GM12878 (cell line): ENCODE measurements at regions of chr17 and their contacts with region 1.

Region 1: DNA sequence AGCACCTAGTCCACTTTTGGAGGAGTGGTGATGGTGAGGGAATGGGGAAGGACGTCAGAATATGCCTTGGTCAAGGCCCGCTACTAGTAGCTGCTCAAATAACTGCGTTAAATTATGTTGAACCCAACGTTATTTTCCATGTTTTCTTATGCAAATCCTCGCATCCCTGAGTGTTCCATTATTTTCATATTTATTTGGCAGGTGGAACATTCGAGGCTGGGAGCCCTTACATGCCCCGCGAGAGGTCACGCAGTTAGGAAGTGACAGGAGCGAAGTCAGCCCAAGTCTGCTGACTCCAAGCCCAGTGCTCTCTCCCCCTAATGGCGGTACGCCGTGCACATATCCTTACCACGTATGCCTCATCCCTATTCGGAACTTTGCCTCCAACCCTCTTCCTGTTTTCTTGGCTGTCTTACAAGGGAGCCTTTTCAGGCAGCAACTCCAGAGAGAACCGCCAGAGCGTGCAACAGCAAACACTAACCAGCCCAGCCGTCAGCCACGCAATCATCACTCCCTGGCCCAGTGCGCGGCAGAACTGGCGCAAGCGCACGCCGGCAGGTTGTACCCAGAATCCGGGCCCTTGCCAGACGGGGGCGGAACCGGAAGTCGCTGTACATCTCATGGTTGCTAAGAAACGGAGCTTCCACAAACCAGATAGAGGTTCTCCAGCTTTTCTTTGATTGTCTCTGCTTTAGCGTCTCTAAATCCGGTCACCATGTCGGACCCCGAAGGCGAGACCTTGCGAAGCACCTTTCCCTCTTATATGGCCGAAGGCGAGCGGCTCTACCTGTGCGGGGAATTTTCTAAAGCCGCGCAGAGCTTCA is at the start of gene ODAD4:
- DNase-seq: peak; percentile 76
- ATAC-seq: peak; percentile 100
- H3K4me3 ChIP-seq: peak within 1 kb of the TSS; percentile 81
- H3K27ac ChIP-seq: peak within 1 kb of the TSS; percentile 62
- H3K4me1 ChIP-seq: peaks cover 7% of the 10 kb centered on the region
- H3K27me3 ChIP-seq: no peaks in the 10 kb centered on the region
- CTCF ChIP-seq: peak in 2 of 3 experiments; percentile 30 to 48; a peak in 3 of 6 replicates
- EP300 ChIP-seq: no peak
- POLR2A ChIP-seq: peak; percentile 97
- RAD21 ChIP-seq: no peak
- polyA plus RNA-seq, gene ODAD4: 0.10 to 0.44 TPM

Region 2: DNA sequence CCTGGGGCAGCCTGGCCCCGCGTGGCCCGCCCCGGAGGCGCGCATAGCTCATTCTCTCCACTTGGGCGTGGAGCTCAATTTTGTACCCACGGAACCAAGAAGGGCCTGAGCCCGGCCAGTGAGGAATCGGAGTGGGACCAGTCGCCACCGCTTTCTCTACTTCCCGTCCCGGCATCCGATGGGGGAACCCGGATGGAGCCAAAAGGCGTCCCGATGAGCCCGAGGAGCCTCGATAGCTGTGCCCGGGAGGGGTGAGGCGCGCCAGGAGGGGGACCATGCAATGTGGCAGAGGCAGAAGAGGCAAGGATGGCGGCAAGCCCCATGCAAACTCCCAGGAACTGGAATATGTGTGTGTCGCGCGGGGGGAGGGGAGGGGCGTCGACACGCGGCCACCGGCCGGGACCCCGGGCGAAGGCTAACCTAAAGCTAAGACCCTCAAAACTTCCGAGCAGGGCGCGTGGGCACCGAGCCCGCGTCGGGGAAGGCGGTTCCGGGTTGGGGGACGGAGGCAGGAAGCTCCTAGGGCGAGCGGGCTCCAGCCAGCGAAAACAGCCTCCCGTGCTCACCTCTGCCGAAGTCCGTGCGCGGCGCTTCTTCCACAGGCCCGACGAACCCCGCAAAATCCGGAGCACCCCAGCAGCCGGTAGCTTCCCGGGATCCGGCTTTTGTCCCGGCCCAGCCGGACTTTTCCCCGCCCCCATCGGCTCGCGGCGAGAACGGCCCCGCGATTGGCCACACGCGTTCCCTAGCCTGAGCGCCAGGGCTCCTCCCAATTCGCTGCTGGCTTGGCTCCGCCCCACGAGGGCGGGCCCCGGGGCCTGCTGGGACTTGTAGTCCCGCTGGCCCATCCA is 11.7 kb before region 1 on chr17 and contains the start of gene ACLY:
- CTCF ChIA-PET with region 1: interaction called, 16 read pairs
- POLR2A ChIA-PET with region 1: interaction called, 52 read pairs
- RAD21 ChIA-PET with region 1: interaction called, 23 read pairs
- SMC1A ChIA-PET with region 1: interaction called, 19 read pairs
- in situ Hi-C with region 1: no loop called
- intact Hi-C with region 1: no loop called
- DNase-seq: no peak
- ATAC-seq: peak; percentile 98
- H3K4me3 ChIP-seq: peak within 1 kb of the TSS; percentile 98
- H3K27ac ChIP-seq: peak within 1 kb of the TSS; percentile 86
- H3K4me1 ChIP-seq: peaks cover 19% of the 10 kb centered on the region
- H3K27me3 ChIP-seq: no peaks in the 10 kb centered on the region
- CTCF ChIP-seq: 0 out of 6 replicates have a peak, but pooled peaks of 1 of the 3 experiments have one; percentile 9
- EP300 ChIP-seq: no peak
- POLR2A ChIP-seq: peak; percentile 87
- RAD21 ChIP-seq: no peak
- polyA plus RNA-seq, gene ACLY: 32.6 to 39.6 TPM

Region 3: GRCh38 chr17:41959336-41960095 is 29.3 kb after region 1 on chr17:
- CTCF ChIA-PET with region 1: interaction called, 17 read pairs
- POLR2A ChIA-PET with region 1: interaction called, 3 read pairs
- RAD21 ChIA-PET with region 1: interaction called, 3 read pairs
- SMC1A ChIA-PET with region 1: interaction called, 5 read pairs
- in situ Hi-C with region 1: no loop called
- intact Hi-C with region 1: no loop called
- DNase-seq: no peak
- ATAC-seq: peak; percentile 85
- H3K4me3 ChIP-seq: no peak overlapping the region
- H3K27ac ChIP-seq: no peak overlapping the region
- H3K4me1 ChIP-seq: no peaks in the 10 kb centered on the region
- H3K27me3 ChIP-seq: no peaks in the 10 kb centered on the region
- CTCF ChIP-seq: peak; percentile 32 to 48 (median 47); a peak in 4 of 6 replicates
- EP300 ChIP-seq: no peak
- POLR2A ChIP-seq: no peak
- RAD21 ChIP-seq: peak; percentile 50